CD4-positive, alpha-beta memory T cell (primary cell): ENCODE measurements at regions of chr12 and their contacts with region 1.

Region 1: DNA sequence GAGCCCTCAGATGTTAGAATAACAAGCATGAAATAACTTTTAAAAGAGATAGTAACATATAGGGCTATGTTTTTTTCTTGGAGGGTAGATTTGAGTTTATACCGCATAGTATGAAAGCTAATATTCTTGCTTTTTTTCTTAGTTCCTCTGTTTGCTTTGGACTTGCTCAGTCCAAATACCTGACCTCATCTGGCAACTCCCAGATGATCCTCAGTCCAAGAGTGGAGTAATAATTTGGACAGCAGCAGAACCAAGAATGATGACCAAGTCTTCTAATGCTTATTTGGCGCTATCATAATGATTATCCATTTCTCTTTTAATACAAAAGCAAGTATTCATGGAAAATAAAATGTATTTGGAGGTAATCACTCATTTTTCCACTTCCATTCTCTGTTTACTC is 45.6 kb downstream of the GUCY2C start:
- DNase-seq: no peak
- H3K4me3 ChIP-seq: no peak overlapping the region
- H3K4me3 Mint-ChIP-seq: no peak overlapping the region
- H3K27ac ChIP-seq: no peak overlapping the region
- H3K27ac Mint-ChIP-seq: no peak overlapping the region
- H3K4me1 ChIP-seq: no peaks in the 10 kb centered on the region
- H3K4me1 Mint-ChIP-seq: no peaks in the 10 kb centered on the region
- H3K27me3 ChIP-seq: no peaks in the 10 kb centered on the region
- H3K27me3 Mint-ChIP-seq: peaks cover 0 to 4% of the 10 kb centered on the region in 2 donors

Region 2: GRCh38 chr12:14635776-14636175 is 15.0 kb before region 1 on chr12:
- CTCF ChIA-PET with region 1: no interaction called
- POLR2A ChIA-PET with region 1: no interaction called
- intact Hi-C with region 1: loop called (anchors 1 kb)
- DNase-seq: no peak
- H3K4me3 ChIP-seq: no peak overlapping the region
- H3K4me3 Mint-ChIP-seq: no peak overlapping the region
- H3K27ac ChIP-seq: no peak overlapping the region
- H3K27ac Mint-ChIP-seq: no peak overlapping the region
- H3K4me1 ChIP-seq: no peaks in the 10 kb centered on the region
- H3K4me1 Mint-ChIP-seq: no peaks in the 10 kb centered on the region
- H3K27me3 ChIP-seq: no peaks in the 10 kb centered on the region
- H3K27me3 Mint-ChIP-seq: peaks cover 0 to under 1% of the 10 kb centered on the region in 2 donors